Common myeloid progenitor, CD34-positive (primary cell): ENCODE measurements at regions of chr11 and their contacts with region 1.

Region 1: GRCh38 chr11:102614485-102614884 is 10.6 kb downstream of the MMP20 start:
- DNase-seq: peak in 2 of 3 donors; percentile 14 to 28
- H3K4me3 ChIP-seq: no peak overlapping the region
- H3K27ac ChIP-seq: no peak overlapping the region
- H3K4me1 ChIP-seq: no peaks in the 10 kb centered on the region
- H3K27me3 ChIP-seq: no peaks in the 10 kb centered on the region

Region 2: DNA sequence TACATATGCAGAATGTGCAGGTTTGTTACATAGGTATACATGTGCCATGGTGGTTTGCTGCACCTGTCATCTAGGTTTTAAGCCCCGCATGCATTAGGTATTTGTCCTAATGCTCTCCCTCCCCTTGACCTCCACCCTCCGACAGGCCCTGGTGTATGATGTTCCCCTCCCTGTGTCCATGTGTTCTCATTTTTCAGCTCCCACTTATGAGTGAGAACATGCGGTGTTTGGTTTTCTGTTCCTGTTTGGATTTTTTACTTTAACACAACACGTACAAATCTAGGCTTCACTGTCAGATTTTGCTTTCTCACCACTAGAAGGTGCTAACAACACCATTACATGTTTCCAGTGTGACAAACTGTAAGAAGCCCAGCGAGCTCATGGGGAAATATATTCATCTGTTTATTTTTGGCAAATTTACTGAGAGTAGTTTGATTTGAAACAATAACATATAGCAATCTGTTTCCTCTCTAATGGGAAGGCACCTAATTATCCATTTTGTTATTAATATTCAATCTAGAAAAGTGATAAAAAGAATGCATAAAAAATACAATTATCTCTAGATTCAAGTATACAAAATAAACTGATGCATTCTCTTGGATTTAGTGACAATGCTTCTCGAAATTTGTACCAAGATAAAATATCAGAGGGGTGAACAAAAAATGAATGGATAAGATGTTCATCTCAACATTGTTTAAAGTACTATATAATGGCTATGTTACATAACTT is 320.4 kb before region 1 on chr11:
- CTCF ChIA-PET with region 1: interaction called, 18 read pairs
- POLR2A ChIA-PET with region 1: no interaction called
- DNase-seq: peak; percentile 67 to 84 (median 83)
- H3K4me3 ChIP-seq: peak overlapping the region in 1 of 7 experiments; percentile 42
- H3K27ac ChIP-seq: no peak overlapping the region
- H3K4me1 ChIP-seq: peaks cover 0 to 12% (median 5%) of the 10 kb centered on the region in 4 experiments
- H3K27me3 ChIP-seq: no peaks in the 10 kb centered on the region

Region 3: DNA sequence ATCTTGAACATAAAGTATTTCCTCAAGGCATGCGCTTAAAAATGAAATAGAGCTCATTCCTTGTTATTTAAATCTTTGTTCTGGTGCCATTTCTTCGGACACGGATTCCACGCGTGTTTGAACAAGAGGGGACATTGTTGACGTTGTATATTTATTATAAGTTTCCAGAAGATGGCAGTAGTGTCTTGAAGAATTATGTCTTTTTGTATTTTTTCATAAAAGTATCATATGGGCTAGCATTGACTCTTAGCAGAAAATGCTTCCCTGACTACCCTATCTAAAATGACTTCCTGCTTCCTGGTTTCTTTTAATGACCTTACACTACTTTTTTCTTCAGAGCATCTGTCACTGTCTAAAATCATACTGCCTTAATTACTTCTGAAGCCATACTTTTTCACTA is 247.1 kb before region 1 on chr11:
- CTCF ChIA-PET with region 1: interaction called, 24 read pairs
- POLR2A ChIA-PET with region 1: no interaction called
- DNase-seq: peak; percentile 38 to 68 (median 61)
- H3K4me3 ChIP-seq: no peak overlapping the region
- H3K27ac ChIP-seq: no peak overlapping the region
- H3K4me1 ChIP-seq: no peaks in the 10 kb centered on the region
- H3K27me3 ChIP-seq: no peaks in the 10 kb centered on the region

Region 4: GRCh38 chr11:102416976-102417375 is 197.5 kb before region 1 on chr11:
- CTCF ChIA-PET with region 1: no interaction called
- POLR2A ChIA-PET with region 1: no interaction called
- DNase-seq: no peak
- H3K4me3 ChIP-seq: no peak overlapping the region
- H3K27ac ChIP-seq: no peak overlapping the region
- H3K4me1 ChIP-seq: no peaks in the 10 kb centered on the region
- H3K27me3 ChIP-seq: no peaks in the 10 kb centered on the region

Region 5: DNA sequence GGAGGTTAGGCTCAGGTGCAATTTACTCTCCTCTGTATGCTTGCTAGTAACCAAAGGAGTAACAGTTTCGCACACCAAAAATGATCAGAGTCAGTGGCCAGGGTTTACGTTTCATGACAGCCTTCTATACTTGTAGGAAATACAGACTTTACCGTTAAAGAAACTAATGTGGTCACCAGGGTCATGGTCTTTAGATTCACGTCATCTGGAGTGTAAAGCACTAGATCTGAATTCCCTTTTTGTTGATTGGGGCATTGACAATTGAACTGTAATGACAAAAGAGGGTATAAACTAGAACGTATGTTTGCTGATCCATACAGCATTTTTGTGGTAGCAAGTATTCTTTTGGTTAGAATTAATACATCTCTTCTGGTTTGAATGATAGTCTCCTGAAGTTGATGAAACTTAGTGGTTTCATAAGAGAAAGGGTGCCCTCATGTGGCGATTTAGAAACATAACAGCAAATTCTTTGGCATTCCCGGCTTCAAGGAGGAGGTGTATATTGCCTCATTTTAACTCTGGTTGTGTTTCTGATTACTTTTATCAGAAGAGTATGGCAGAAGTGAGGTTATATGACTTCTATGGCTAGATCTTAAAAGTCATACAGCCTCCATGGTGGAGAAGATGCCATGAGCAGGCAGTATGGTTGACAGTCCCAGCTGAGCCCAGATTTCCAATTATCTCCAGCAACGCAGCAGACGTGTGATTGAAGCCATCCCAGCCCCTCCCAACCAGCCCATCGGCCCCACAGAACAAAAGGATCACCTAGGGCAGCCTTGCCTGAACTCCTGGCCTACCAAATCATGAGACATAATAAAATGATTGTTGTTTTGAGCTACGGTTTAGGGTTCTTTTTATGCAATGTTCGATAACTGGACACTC is 119.1 kb before region 1 on chr11:
- CTCF ChIA-PET with region 1: interaction called, 23 read pairs
- POLR2A ChIA-PET with region 1: no interaction called
- DNase-seq: peak; percentile 82 to 90 (median 86)
- H3K4me3 ChIP-seq: no peak overlapping the region
- H3K27ac ChIP-seq: no peak overlapping the region
- H3K4me1 ChIP-seq: no peaks in the 10 kb centered on the region
- H3K27me3 ChIP-seq: no peaks in the 10 kb centered on the region

Region 6: GRCh38 chr11:102599642-102600261 is 14.7 kb before region 1 on chr11:
- CTCF ChIA-PET with region 1: interaction called, 34 read pairs
- POLR2A ChIA-PET with region 1: no interaction called
- DNase-seq: peak; percentile 58 to 89 (median 89)
- H3K4me3 ChIP-seq: no peak overlapping the region
- H3K27ac ChIP-seq: no peak overlapping the region
- H3K4me1 ChIP-seq: peaks cover 0 to 3% (median 1%) of the 10 kb centered on the region in 4 experiments
- H3K27me3 ChIP-seq: no peaks in the 10 kb centered on the region

Region 7: DNA sequence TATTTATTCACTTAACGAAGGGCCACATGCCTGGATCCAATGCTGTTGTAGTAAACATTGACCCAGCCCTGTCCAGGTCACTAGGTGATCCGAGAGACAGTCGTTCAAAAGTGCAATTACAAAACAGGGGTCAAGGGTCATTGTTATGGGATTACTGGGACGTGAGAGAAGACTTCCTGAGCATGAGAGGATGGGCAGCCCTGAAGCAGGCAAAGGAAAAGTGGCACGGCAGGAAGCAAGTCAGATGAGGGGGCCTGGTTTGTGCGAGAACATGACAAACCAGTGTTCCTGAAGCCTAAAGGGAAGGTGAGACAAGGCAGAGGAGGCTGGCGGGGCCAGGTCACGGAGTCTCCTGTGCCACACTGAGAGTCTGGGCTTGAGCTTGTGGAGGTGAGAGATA is 26.5 kb after region 1 on chr11:
- CTCF ChIA-PET with region 1: no interaction called
- POLR2A ChIA-PET with region 1: no interaction called
- DNase-seq: peak in 2 of 3 donors; percentile 2 to 17
- H3K4me3 ChIP-seq: no peak overlapping the region
- H3K27ac ChIP-seq: no peak overlapping the region
- H3K4me1 ChIP-seq: no peaks in the 10 kb centered on the region
- H3K27me3 ChIP-seq: no peaks in the 10 kb centered on the region